Activated CD4-positive, alpha-beta memory T cell treated with anti-CD3 and anti-CD28 coated beads for 36 hours (primary cell): ENCODE measurements at regions of chr9 and their contacts with region 1.

Region 1: GRCh38 chr9:20622330-20623020 is at the start of gene MLLT3:
- DNase-seq: peak; percentile 98
- H3K4me3 Mint-ChIP-seq: peak within 1 kb of the TSS; percentile 96
- H3K27ac Mint-ChIP-seq: peak within 1 kb of the TSS; percentile 94
- H3K4me1 Mint-ChIP-seq: peaks cover 41% of the 10 kb centered on the region
- H3K27me3 Mint-ChIP-seq: no peaks in the 10 kb centered on the region
- total RNA-seq, gene MLLT3: 30.8 to 34.0 TPM

Region 2: GRCh38 chr9:19976226-19976625 is 646.2 kb before region 1 on chr9:
- CTCF ChIA-PET with region 1: no interaction called
- POLR2A ChIA-PET with region 1: no interaction called
- intact Hi-C with region 1: loop called (anchors 1 kb)
- DNase-seq: peak; percentile 45
- H3K4me3 Mint-ChIP-seq: no peak overlapping the region
- H3K27ac Mint-ChIP-seq: peak overlapping the region; percentile 74
- H3K4me1 Mint-ChIP-seq: peaks cover 23% of the 10 kb centered on the region
- H3K27me3 Mint-ChIP-seq: no peaks in the 10 kb centered on the region

Region 3: DNA sequence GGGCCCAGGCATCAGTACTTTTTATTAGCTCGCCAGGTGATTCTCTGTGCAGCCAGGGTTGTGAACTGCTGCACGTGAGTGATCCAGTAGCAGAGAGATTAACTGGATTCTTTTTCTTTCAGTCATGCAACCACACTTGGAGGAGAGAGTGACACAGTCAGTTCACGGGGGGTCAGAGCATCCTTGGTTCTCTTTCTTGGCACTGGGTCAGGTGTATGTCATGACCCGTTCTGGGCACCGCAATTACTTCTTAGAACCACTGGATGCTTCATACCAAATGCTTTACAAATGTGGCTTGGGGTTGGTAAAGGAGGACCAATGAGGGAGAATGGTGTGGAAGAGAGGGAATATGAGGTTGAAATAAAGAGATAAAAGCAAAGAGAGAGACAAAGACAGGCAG is 368.8 kb before region 1 on chr9:
- CTCF ChIA-PET with region 1: no interaction called
- POLR2A ChIA-PET with region 1: no interaction called
- intact Hi-C with region 1: no loop called
- DNase-seq: no peak
- H3K4me3 Mint-ChIP-seq: no peak overlapping the region
- H3K27ac Mint-ChIP-seq: no peak overlapping the region
- H3K4me1 Mint-ChIP-seq: peaks cover 32% of the 10 kb centered on the region
- H3K27me3 Mint-ChIP-seq: no peaks in the 10 kb centered on the region

Region 4: GRCh38 chr9:20319641-20320337 is 302.7 kb before region 1 on chr9:
- CTCF ChIA-PET with region 1: no interaction called
- POLR2A ChIA-PET with region 1: interaction called, 7 read pairs
- intact Hi-C with region 1: loop called (anchors 1 kb)
- DNase-seq: peak; percentile 48
- H3K4me3 Mint-ChIP-seq: no peak overlapping the region
- H3K27ac Mint-ChIP-seq: peak overlapping the region; percentile 63
- H3K4me1 Mint-ChIP-seq: peaks cover 80% of the 10 kb centered on the region
- H3K27me3 Mint-ChIP-seq: no peaks in the 10 kb centered on the region

Region 5: GRCh38 chr9:20441711-20442423 is 180.6 kb before region 1 on chr9:
- CTCF ChIA-PET with region 1: interaction called, 3 read pairs
- POLR2A ChIA-PET with region 1: no interaction called
- intact Hi-C with region 1: loop called (anchors 5 kb)
- DNase-seq: no peak
- H3K4me3 Mint-ChIP-seq: no peak overlapping the region
- H3K27ac Mint-ChIP-seq: no peak overlapping the region
- H3K4me1 Mint-ChIP-seq: peaks cover 30% of the 10 kb centered on the region
- H3K27me3 Mint-ChIP-seq: no peaks in the 10 kb centered on the region

Region 6: GRCh38 chr9:20558566-20559016 is 63.9 kb before region 1 on chr9:
- CTCF ChIA-PET with region 1: interaction called, 8 read pairs
- POLR2A ChIA-PET with region 1: interaction called, 12 read pairs
- intact Hi-C with region 1: loop called (anchors 1 kb)
- DNase-seq: peak; percentile 60
- H3K4me3 Mint-ChIP-seq: no peak overlapping the region
- H3K27ac Mint-ChIP-seq: peak overlapping the region; percentile 65
- H3K4me1 Mint-ChIP-seq: peaks cover 86% of the 10 kb centered on the region
- H3K27me3 Mint-ChIP-seq: no peaks in the 10 kb centered on the region

Region 7: DNA sequence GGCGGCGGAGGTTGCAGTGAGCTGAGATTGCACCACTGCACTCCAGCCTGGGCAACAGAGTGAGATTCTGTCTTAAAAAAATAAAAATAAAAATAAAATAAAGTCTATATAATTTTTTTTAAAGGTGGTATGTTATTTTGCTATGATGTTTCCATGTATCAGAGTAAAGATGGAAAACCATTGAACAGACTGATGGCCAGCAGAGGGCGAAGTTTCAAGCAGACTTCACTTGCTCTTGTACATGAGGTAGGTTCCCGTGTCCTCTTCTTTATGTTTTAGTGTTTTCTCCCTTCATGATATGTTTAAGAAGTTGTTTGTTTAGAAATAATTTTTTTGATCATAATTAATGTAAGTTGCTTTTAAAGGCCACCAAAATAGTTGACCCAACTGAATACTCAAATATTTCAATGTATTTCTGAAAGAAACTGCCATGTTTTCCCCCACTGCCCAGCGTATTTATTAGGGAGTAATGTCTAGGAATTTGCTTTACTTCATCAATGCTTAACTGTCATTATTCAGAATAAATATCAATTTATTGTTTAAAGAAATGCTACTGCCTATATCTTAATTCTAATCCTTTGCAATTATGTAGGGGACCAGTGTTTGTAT is 262.6 kb after region 1 on chr9:
- CTCF ChIA-PET with region 1: interaction called, 18 read pairs
- POLR2A ChIA-PET with region 1: no interaction called
- intact Hi-C with region 1: loop called (anchors 1 kb)
- DNase-seq: peak; percentile 69
- H3K4me3 Mint-ChIP-seq: no peak overlapping the region
- H3K27ac Mint-ChIP-seq: no peak overlapping the region
- H3K4me1 Mint-ChIP-seq: no peaks in the 10 kb centered on the region
- H3K27me3 Mint-ChIP-seq: no peaks in the 10 kb centered on the region

Region 8: GRCh38 chr9:20906326-20906725 is 283.9 kb after region 1 on chr9:
- CTCF ChIA-PET with region 1: no interaction called
- POLR2A ChIA-PET with region 1: no interaction called
- intact Hi-C with region 1: no loop called
- DNase-seq: no peak
- H3K4me3 Mint-ChIP-seq: no peak overlapping the region
- H3K27ac Mint-ChIP-seq: no peak overlapping the region
- H3K4me1 Mint-ChIP-seq: no peaks in the 10 kb centered on the region
- H3K27me3 Mint-ChIP-seq: no peaks in the 10 kb centered on the region

Region 9: DNA sequence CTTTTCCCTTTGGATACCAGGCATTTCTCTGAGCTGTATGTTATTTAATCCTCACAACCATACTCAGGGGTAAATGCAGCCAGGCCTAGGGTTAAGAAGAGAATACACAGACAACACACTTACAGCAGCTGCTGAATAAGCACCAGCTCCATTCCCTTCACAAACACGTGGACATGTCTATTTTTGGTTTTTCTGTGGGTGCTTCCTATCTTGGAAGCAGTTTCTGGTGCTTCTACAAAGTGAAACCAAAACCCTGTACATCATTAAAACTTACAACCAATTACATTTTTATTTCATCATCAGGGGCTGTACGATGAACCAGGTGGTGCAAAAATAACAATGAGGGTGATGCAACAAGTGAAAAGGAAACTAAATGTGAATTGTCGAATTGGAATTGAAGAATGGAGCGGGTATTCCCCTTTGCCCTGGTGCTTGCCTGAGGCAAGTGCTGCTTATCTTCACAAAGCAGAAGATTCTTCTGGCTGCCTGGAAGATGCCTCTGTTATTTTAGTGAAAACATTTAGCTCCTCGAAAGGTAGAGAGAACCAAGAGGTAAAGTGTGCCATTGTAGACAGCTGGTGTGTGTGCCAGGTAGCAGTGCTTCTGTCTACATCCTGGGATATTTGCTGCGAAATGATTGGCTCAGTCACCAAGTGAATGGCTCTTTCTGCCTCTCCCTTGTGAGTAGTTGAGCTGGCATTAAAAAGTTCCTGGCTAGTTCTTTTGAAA is 473.9 kb after region 1 on chr9:
- CTCF ChIA-PET with region 1: interaction called, 5 read pairs
- POLR2A ChIA-PET with region 1: interaction called, 4 read pairs
- intact Hi-C with region 1: loop called (anchors 5 kb)
- DNase-seq: peak; percentile 49
- H3K4me3 Mint-ChIP-seq: peak overlapping the region; percentile 73
- H3K27ac Mint-ChIP-seq: peak overlapping the region; percentile 85
- H3K4me1 Mint-ChIP-seq: peaks cover 34% of the 10 kb centered on the region
- H3K27me3 Mint-ChIP-seq: no peaks in the 10 kb centered on the region